ENCODE measurements at regions of chr14 and their contacts with region 1.

Region 1: DNA sequence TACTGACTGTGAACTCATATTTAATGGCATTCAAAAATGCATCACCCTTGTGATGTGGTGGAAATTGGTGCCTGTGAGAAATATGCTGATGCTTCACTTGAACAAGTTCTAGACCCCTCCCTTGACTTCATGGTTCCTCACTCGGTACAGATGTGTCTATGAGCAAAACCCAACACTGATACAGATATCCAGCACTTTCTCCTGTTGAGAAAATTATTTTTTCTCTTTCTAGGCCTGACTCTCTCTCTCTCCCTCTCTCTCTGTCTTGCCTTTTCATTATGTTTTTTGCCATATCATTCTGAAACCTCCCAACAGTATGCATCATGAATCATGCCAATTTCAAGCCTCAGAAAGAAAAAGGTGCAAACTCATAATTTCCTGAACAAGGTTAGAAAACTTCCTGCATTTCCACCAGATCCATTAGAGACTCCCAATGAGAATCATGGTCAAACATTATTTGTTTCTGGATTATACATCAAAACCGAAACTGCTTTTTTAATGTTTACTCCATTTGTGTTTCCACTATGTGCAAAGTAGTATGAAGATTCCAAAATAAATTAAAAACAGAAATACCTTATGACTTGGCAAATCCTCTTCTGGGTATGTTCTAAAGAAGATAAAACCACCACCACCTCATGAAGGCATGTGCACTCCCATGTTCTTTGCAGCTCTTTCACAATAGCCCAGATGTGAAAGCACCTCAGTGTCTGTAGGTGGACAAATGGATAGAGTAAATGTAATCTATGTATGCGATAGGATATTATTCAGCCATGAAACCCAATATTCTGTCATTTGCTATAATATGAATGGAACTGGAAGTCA is 543.6 kb downstream of the TMEM121 start:
- DNase-seq: no peak
- ATAC-seq: no peak
- H3K4me3 ChIP-seq: no peak overlapping the region
- H3K27ac ChIP-seq: no peak overlapping the region
- H3K4me1 ChIP-seq: no peaks in the 10 kb centered on the region
- H3K27me3 ChIP-seq: no peaks in the 10 kb centered on the region
- CTCF ChIP-seq: no peak
- EP300 ChIP-seq: no peak
- POLR2A ChIP-seq: no peak
- RAD21 ChIP-seq: no peak

Region 2: GRCh38 chr14:106129274-106129673 is 59.3 kb after region 1 on chr14:
- CTCF ChIA-PET with region 1: no interaction called
- POLR2A ChIA-PET with region 1: no interaction called
- in situ Hi-C with region 1: loop called (anchors 5 kb)
- intact Hi-C with region 1: no loop called
- DNase-seq: no peak
- ATAC-seq: no peak
- H3K4me3 ChIP-seq: no peak overlapping the region
- H3K27ac ChIP-seq: no peak overlapping the region
- H3K4me1 ChIP-seq: no peaks in the 10 kb centered on the region
- H3K27me3 ChIP-seq: no peaks in the 10 kb centered on the region
- CTCF ChIP-seq: peak in 1 of 3 experiments; percentile 3; a peak in 1 of 6 replicates
- EP300 ChIP-seq: no peak
- POLR2A ChIP-seq: no peak
- RAD21 ChIP-seq: no peak